ENCODE measurements at regions of chr1 and their contacts with region 1.

Region 1: DNA sequence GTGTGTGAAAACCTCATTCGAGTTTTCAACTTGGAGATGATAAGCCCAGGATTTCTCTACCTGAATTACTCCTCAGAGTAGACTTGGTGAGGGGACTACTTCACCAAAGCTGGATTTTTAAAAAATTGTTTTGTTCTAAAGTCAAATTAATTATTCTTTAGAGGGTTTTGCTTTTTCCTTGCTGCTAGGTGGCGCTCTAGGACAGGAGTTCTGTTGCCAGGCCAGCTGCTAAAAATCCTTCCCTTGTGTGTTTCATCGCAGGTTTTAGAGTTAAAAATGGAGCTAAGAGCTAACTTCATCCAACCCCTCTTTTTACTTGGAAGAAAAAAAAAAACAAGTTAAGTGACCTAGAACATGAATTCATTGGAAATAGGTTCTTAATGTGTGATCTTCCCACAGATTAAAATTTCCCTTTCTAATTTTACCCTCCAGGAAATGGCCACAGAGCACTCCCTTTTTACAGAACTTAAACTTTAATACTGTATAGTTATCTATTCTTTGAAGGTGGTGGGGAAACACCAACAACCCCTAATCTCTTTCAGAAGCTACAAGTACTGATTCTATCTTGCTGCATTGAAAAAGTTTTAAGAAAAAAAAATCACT is 36.7 kb upstream of the FAM163A start:
- DNase-seq: peak; percentile 53 to 91
- H3K4me3 ChIP-seq: no peak overlapping the region
- H3K27ac ChIP-seq: no peak overlapping the region
- H3K4me1 ChIP-seq: peaks cover 0 to 47% (median 11%) of the 10 kb centered on the region in 4 donors
- H3K27me3 ChIP-seq: no peaks in the 10 kb centered on the region
- CTCF ChIP-seq: peak in 5 of 7 experiments; percentile 29 to 75 (median 68)
- EP300 ChIP-seq: no peak
- POLR2A ChIP-seq: no peak

Region 2: GRCh38 chr1:179809506-179810366 is 103.3 kb after region 1 on chr1:
- intact Hi-C with region 1: loop called (anchors 5 kb)
- DNase-seq: peak; percentile 64 to 92
- H3K4me3 ChIP-seq: no peak overlapping the region
- H3K27ac ChIP-seq: no peak overlapping the region
- H3K4me1 ChIP-seq: peaks cover 5 to 14% (median 11%) of the 10 kb centered on the region in 4 donors
- H3K27me3 ChIP-seq: peaks cover 0 to 30% (median 0%) of the 10 kb centered on the region in 3 donors
- CTCF ChIP-seq: peak in 5 of 7 experiments; percentile 86 to 93 (median 89)
- EP300 ChIP-seq: no peak
- POLR2A ChIP-seq: no peak

Region 3: DNA sequence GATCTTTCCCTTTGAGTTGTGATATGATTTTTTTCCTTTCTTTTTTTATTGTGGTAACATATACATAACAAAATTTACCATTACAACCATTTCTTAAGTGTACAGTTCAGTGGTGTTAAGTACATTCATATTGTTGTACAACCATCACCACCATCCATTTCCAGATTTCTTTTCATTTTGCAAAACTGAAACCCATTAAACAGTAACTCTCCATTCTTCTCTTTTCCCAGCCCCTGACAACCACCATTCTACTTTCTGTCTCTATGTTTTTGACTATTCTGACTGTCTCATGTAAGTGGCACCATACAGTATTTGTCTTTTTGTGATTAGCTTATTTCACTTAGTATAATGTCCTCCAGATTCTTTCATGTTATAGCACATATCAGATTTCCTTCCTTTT is 278.5 kb after region 1 on chr1:
- intact Hi-C with region 1: no loop called
- DNase-seq: no peak
- H3K4me3 ChIP-seq: no peak overlapping the region
- H3K27ac ChIP-seq: no peak overlapping the region
- H3K4me1 ChIP-seq: peaks cover 0 to 21% (median 4%) of the 10 kb centered on the region in 4 donors
- H3K27me3 ChIP-seq: no peaks in the 10 kb centered on the region
- CTCF ChIP-seq: no peak
- EP300 ChIP-seq: no peak
- POLR2A ChIP-seq: no peak

Measured in stomach (tissue), 19 donors.